ENCODE measurements at regions of chr5 and their contacts with region 1.

Region 1: DNA sequence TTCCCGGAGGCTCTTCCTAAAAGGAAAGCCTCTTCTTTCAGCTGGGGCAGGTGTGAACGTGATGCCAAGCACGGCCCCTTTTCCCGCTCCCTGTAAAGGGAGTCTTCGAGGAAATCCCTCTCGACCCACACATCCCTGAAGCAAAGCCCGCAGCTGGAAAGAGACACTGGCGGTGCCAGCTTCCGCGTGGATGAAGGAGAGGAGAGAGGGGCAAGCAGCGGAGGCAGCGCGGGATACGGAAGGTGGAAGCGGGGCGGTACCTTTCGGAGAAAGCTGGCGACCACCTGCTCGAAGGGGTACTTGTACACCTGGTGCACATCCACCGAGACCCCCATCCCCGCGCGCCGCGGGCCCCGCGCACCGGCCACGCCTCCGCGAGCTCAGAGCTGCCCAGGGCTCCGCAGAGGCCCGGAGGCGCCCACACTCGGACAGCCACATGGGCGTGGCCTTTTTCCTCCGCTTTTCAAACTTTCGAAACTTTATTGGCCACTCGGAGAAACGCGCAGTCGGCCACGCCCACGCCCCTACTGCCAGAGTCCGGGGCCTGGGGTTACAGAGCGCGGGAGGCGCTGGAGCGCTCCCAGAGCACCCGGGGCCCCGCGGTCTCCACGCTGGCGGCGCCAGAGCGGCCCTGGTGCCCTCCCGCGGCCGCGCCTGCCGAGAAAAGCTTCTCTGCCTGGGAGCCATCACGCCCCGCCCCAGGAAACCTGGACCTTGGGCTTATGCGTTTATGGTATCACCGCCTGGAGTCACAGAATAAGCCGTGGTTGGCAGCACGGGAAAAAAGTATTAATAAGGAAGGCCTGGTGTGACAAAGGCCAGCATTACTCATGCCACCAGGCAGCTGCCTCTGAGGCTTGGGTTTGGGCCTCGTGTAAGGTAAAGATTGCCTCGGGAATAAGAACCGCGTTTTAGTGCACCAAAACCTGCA is at the start of gene PRELID2:
- DNase-seq: peak; percentile 61 to 88
- ATAC-seq: peak; percentile 91 to 98
- H3K4me3 ChIP-seq: peak within 1 kb of the TSS; percentile 67
- H3K27ac ChIP-seq: peak within 1 kb of the TSS; percentile 80 to 88
- H3K4me1 ChIP-seq: peaks cover 26% of the 10 kb centered on the region
- CTCF ChIP-seq: 0 out of 3 replicates have a peak, but pooled peaks have one; percentile 33
- EP300 ChIP-seq: no peak
- POLR2A ChIP-seq: peak; percentile 62
- RAD21 ChIP-seq: peak; percentile 9 to 58; a peak in 3 of 5 replicates
- polyA plus RNA-seq, gene PRELID2: 8.2 and 10.4 TPM in 2 replicates

Region 2: DNA sequence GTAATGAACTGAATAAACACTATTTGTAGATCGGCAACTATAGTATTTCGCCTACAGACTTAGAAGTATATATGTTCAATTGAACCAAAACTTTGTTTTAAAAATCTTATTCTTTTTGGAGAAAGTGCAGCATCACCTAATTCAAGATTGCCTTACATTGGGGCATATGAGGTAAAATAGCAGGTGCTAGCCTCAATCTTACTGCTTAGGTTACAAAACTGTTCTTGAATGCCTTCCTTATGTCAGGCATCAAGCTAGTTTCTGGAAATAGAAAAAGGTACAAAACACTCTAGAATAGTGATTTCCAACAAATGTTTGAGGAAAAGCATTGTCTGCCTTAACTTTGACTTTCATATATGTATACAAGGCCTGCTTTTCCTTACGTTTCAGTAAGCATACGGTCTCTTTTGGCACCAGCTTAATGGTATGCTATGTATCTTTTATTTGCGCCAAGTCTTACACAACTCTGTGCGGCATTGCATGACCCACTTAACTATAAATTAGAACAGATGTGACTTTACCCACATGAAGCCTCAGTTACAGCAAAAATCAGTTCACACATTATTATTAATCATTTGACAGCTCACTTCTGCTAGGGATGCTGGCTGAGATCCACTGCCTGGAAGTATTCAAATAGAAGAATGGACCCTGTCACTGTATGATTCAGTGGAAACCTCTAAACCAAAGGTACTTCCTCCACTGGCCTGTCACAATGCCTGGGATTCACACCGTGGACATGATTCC is 174.1 kb before region 1 on chr5:
- CTCF ChIA-PET with region 1: no interaction called
- POLR2A ChIA-PET with region 1: no interaction called
- DNase-seq: no peak
- ATAC-seq: no peak
- H3K4me3 ChIP-seq: no peak overlapping the region
- H3K27ac ChIP-seq: no peak overlapping the region
- H3K4me1 ChIP-seq: no peaks in the 10 kb centered on the region
- CTCF ChIP-seq: no peak
- EP300 ChIP-seq: no peak
- POLR2A ChIP-seq: no peak
- RAD21 ChIP-seq: no peak

Region 3: DNA sequence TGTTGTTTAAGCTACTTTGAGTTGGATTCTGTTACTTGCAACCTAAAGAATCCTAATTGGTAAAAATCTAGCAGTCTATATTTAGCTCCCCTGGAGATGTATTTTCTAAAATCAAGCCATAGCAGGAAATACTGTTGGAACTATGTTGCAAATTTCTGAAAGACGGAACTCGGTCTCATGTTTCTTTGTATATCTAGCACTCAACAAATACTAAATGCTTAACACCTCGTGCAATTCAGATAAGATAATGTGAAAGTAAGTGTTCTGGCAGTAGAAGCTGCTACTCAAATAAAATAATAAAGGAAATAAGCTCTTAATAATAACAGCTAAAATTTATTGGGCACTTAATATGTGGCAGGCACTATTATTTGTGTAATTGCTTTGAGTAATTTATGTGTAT is 10.9 kb after region 1 on chr5:
- CTCF ChIA-PET with region 1: interaction called, 18 read pairs
- POLR2A ChIA-PET with region 1: interaction called, 3 read pairs
- DNase-seq: no peak
- ATAC-seq: no peak
- H3K4me3 ChIP-seq: no peak overlapping the region
- H3K27ac ChIP-seq: no peak overlapping the region
- H3K4me1 ChIP-seq: 0 out of 3 replicates have a peak, but pooled peaks cover 7% of the 10 kb centered on the region
- CTCF ChIP-seq: no peak
- EP300 ChIP-seq: no peak
- POLR2A ChIP-seq: no peak
- RAD21 ChIP-seq: no peak

Region 4: DNA sequence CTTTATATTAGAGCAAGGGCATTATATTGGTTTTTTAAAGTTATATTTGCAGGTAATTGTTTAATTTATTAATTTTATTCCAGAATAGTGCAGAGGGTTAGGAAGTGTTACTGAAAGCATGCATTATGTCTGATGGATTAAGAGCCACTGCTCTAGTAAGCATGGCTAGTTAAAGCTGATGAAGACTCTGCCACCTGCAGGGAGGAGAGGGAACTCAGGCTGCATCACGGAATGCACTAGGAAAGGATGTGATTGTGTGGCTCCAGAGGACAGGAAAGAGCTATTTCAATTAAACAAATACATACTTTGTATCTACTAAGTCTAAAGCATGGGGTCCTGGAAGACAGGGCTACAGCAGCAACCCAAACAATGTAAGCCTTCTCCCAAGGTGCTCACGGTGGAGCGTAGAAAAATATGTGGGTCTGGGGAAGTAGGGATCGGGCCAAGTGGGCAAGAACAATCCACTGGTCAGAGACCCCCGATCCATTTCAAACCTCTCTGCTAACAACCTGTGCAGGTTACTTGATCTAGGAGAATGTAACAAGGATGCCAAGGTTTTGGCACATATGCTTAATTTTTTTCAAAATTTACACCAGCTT is 52.9 kb after region 1 on chr5:
- CTCF ChIA-PET with region 1: interaction called, 11 read pairs
- POLR2A ChIA-PET with region 1: interaction called, 3 read pairs
- DNase-seq: peak; percentile 40 to 53
- ATAC-seq: peak; percentile 97 to 98
- H3K4me3 ChIP-seq: no peak overlapping the region
- H3K27ac ChIP-seq: no peak overlapping the region
- H3K4me1 ChIP-seq: no peaks in the 10 kb centered on the region
- CTCF ChIP-seq: peak; percentile 54
- EP300 ChIP-seq: no peak
- POLR2A ChIP-seq: no peak
- RAD21 ChIP-seq: peak; percentile 47 to 62; a peak in 4 of 5 replicates